IMR-90 (cell line): ENCODE measurements at regions of chr9 and their contacts with region 1.

Region 1: DNA sequence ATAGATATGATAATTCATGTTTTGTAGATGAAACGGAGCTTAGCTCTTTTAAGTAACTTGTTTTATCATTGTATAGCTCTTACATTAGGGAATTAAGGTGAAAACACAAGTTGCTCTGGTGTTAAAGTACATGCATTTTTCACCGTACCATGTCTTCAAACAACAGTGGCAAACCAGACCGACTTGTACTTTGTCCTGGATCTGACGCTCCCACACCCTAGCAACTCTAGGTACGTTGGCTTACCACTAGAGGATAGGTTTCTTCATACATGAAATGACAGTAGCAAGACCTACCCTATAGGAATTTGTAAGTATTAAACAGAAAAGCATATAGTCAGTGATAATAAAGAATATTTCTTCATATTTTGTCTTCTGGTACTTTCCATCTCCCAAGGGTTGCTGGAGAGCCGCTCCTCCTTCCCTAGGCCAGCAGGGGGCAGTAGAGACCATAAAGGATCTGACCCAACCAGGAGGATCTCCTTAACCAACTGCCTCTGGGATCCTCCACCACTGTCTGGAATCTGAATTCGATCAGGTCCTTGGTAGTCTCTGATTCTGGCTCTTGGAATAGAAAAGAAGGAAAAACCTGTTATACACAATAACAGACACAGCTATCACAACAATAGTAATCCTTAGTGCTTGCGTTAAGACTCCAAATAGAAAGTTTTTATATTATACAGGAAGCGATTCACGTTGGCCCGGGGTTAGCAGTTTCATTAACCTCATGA is 136.7 kb downstream of the CAVIN4 start:
- DNase-seq: peak; percentile 48
- ATAC-seq: peak; percentile 93
- H3K4me3 ChIP-seq: no peak overlapping the region
- H3K27ac ChIP-seq: no peak overlapping the region
- H3K4me1 ChIP-seq: no peaks in the 10 kb centered on the region
- H3K27me3 ChIP-seq: no peaks in the 10 kb centered on the region
- CTCF ChIP-seq: peak; percentile 80
- POLR2A ChIP-seq: no peak
- RAD21 ChIP-seq: peak; percentile 66

Region 2: GRCh38 chr9:100322954-100323536 is 391.5 kb before region 1 on chr9:
- CTCF ChIA-PET with region 1: no interaction called
- POLR2A ChIA-PET with region 1: no interaction called
- dilution Hi-C with region 1: no loop called
- in situ Hi-C with region 1: no loop called
- intact Hi-C with region 1: no loop called
- DNase-seq: peak; percentile 51
- ATAC-seq: peak; percentile 66; the same call in 1 of the 2 replicates
- H3K4me3 ChIP-seq: no peak overlapping the region
- H3K27ac ChIP-seq: no peak overlapping the region
- H3K4me1 ChIP-seq: no peaks in the 10 kb centered on the region
- H3K27me3 ChIP-seq: no peaks in the 10 kb centered on the region
- CTCF ChIP-seq: peak; percentile 76
- POLR2A ChIP-seq: no peak
- RAD21 ChIP-seq: peak; percentile 66

Region 3: DNA sequence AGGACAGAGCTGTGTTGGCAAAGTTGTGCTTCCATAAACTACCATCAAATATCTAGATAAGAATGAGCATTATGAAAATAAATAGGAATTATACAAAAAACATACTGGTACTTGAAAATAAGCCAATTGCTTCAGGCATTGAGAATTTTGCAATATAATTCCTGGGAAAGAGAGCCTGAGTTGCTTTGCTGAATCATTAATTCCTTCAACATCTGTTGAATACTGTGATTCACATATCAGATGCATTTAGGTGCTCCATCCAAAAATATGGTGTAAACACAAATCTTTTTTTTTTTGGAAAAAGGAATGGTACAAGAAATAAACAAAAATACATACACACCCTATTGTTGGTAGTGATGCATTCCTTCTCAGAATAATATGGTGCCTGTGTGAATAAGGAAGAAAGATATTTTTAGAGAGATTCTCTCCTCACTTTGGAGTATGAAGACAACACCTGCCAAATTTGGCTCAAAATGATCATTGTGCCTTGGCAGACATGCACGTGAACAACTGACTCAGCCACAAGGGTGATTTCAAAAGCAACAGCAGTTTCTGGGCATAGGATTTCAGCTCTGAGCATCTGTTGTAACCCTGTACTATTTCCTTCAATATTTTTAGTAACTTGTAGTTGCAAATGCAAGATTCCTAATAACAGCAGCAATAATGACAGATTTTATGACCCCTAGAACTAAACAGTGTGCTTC is 40.0 kb before region 1 on chr9:
- CTCF ChIA-PET with region 1: no interaction called
- POLR2A ChIA-PET with region 1: no interaction called
- dilution Hi-C with region 1: no loop called
- in situ Hi-C with region 1: no loop called
- intact Hi-C with region 1: no loop called
- DNase-seq: no peak
- ATAC-seq: no peak
- H3K4me3 ChIP-seq: no peak overlapping the region
- H3K27ac ChIP-seq: no peak overlapping the region
- H3K4me1 ChIP-seq: no peaks in the 10 kb centered on the region
- H3K27me3 ChIP-seq: no peaks in the 10 kb centered on the region
- CTCF ChIP-seq: no peak
- POLR2A ChIP-seq: no peak
- RAD21 ChIP-seq: no peak

Region 4: DNA sequence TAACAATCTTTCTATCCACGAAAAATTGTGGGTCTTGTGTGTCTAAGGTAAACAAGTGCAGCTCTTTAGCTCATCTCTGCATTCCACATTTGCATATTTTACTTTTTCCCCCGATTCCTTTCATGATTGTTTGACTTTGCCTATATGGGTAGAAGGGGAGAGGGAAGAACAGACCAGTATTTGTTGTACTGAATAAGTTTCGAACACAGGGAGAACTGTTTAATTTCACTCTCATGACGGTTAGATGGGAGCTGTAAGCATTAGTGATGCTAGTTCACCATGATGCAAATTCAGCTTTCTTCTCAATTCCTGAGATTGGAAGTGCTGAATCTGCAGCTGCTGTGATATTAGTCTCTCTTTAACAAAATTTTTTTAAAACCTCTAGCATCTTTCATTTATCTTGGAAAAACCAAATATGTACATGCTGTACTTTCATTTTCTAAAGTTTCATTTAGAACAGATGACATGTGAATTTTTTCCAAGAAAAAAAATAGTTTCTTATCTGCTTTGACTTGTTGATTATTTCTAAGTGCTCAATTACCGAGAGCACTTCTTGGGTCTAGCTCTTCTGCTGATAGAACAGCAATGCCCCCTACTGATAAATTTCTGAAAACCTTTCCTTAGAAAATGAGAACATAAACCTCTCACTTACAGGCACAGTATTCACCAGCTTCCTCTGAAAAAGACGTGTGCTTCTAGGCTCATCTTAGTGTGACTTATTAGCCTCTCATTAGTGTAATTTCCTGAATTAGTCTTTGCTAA is 520.8 kb after region 1 on chr9:
- CTCF ChIA-PET with region 1: no interaction called
- POLR2A ChIA-PET with region 1: no interaction called
- dilution Hi-C with region 1: no loop called
- in situ Hi-C with region 1: no loop called
- intact Hi-C with region 1: loop called (anchors 1 kb)
- DNase-seq: no peak
- ATAC-seq: no peak
- H3K4me3 ChIP-seq: no peak overlapping the region
- H3K27ac ChIP-seq: no peak overlapping the region
- H3K4me1 ChIP-seq: no peaks in the 10 kb centered on the region
- H3K27me3 ChIP-seq: no peaks in the 10 kb centered on the region
- CTCF ChIP-seq: peak; percentile 47
- POLR2A ChIP-seq: no peak
- RAD21 ChIP-seq: peak; percentile 43

Region 5: DNA sequence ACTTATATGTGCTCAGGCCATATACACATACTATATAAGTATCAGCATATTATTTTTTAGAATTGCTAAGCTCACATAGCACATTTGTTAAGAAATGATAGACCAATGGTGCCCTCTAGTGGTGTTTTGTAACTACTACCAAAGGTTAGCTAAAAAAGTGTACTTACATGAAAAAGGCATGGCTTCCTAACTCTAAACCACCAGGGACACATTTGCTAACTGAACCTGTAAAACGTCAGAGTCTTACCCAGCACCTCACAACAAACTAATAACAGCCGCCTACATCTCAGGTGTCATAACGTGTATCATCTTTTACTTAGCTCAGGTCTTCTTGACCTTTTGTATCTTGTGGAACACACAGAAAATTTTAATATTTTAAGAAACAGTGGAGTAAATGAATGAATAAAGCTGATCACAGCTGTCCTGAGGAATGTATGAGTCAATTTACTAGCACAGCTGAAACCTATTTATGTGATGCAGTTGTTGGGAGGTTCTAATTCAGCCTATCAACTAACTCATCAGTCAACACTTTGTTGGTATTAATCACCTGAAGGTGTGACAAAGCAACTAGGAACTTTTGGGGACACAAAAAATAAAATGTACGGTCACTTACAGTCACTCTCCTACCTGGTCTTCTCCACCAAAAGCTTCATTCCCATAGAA is 597.4 kb after region 1 on chr9:
- CTCF ChIA-PET with region 1: interaction called, 3 read pairs
- POLR2A ChIA-PET with region 1: no interaction called
- dilution Hi-C with region 1: no loop called
- in situ Hi-C with region 1: loop called (anchors 10 kb)
- intact Hi-C with region 1: loop called (anchors 1 kb)
- DNase-seq: peak; percentile 84
- ATAC-seq: peak; percentile 72
- H3K4me3 ChIP-seq: no peak overlapping the region
- H3K27ac ChIP-seq: no peak overlapping the region
- H3K4me1 ChIP-seq: no peaks in the 10 kb centered on the region
- H3K27me3 ChIP-seq: peaks cover 1% of the 10 kb centered on the region; the same call in 1 of the 2 replicates
- CTCF ChIP-seq: peak; percentile 82
- POLR2A ChIP-seq: no peak
- RAD21 ChIP-seq: peak; percentile 81

Region 6: DNA sequence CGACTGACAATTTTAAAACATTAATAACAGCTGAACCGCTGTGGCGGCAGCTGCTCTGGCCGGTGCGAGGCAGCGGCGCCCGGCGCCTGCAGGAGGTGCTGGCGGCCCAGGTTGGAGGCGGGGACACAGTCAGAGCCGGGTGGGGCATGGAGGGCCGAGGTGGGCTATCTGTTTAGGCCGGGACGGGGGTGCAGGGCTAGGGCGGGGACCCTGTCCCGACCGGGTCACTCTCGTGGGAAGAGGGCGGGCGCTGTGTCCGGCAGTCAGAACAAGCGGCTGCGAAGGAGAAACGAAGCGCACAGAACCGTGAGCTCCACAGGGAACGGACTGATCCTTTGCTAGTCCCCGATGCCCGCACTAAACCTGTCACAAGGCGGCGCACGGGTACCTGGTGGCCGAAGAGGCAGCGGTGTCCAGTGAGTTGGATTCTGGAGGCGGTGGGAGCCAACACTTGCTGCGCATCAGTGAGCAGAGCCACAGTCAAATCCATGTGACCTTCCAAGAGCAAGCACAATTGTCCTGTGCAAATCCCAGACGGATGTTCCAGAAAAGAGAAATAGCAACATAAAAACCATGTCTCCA is 734.7 kb after region 1 on chr9:
- CTCF ChIA-PET with region 1: no interaction called
- POLR2A ChIA-PET with region 1: no interaction called
- dilution Hi-C with region 1: no loop called
- in situ Hi-C with region 1: no loop called
- intact Hi-C with region 1: loop called (anchors 5 kb)
- DNase-seq: peak; percentile 54
- ATAC-seq: peak; percentile 98
- H3K4me3 ChIP-seq: peak overlapping the region; percentile 70
- H3K27ac ChIP-seq: no peak overlapping the region
- H3K4me1 ChIP-seq: peaks cover 1% of the 10 kb centered on the region; the same call in 1 of the 2 replicates
- H3K27me3 ChIP-seq: peaks cover 2% of the 10 kb centered on the region; the same call in 1 of the 2 replicates
- CTCF ChIP-seq: peak; percentile 62
- POLR2A ChIP-seq: no peak
- RAD21 ChIP-seq: peak; percentile 44